CD8-positive, alpha-beta memory T cell (primary cell): ENCODE measurements at regions of chr6 and their contacts with region 1.

Region 1: DNA sequence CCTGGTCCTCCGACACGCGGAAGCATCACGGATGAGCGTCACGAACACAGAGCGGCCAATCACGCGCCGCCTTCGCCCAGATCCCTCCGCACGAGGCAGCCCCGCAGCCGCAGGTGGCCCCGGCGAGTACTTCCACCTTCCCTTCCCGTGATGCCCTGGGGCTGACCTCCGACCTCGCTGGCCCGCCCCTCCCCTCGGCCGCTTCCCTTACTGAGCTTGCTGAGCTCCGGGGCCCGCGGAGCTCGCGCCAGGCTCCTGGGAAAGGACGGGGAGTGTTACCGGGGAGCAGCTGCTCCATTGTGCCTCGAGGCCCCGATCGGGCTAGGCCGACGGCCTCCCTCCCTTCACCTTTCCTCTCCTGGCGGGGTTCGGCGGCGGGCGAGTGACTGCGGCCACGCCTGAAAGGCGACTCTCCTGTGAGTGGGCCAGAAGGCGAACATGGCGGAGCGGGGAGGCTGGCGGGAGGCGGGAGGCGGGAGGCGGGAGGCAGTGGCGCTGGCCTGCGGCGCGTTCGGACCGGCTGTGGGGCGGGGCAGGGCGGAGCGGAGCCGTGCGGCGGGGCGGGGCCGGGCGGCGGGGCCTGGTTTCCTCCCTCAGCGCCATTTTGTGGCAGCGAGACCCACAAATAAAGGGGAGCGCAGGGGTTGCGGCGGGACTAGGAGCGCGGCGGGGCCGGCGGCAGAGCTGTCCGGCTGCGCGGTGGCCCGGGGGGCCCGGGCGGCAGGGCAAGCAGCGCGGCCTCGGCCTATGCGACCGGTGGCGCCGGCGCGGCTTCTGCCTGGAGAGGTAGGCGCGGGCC is at the start of gene WTAP:
- DNase-seq: peak; percentile 95 to 98 (median 96)
- H3K4me3 ChIP-seq: peak within 1 kb of the TSS; percentile 92
- H3K4me3 Mint-ChIP-seq: peak within 1 kb of the TSS; percentile 91 to 99 (median 94)
- H3K27ac ChIP-seq: peak within 1 kb of the TSS; percentile 98
- H3K27ac Mint-ChIP-seq: peak within 1 kb of the TSS; percentile 97 to 100 (median 99)
- H3K4me1 ChIP-seq: peaks cover 35% of the 10 kb centered on the region
- H3K4me1 Mint-ChIP-seq: peaks cover 54 to 75% (median 63%) of the 10 kb centered on the region in 3 donors
- H3K27me3 ChIP-seq: no peaks in the 10 kb centered on the region
- H3K27me3 Mint-ChIP-seq: peaks cover 0 to 6% of the 10 kb centered on the region in 2 donors
- total RNA-seq, gene WTAP: 95.1 to 103 TPM

Region 2: DNA sequence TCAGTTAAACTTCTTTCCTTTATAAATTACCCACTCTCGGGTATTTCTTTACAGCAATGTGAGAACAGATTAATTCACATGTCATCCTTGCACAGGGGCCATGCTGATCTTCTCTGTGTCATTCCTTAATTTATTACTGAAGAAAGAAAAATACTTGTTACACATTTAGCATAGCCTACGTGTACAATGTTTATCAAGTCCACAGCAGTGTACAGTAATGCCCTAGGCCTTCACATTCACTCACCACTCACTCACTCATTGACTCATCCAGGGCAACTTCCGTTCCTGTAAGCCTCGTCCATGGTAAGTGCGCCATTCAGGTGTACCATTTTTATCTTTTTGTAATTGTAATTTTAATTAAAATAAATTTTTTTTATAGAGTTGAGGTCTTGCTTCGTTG is 800.7 kb before region 1 on chr6:
- CTCF ChIA-PET with region 1: no interaction called
- POLR2A ChIA-PET with region 1: no interaction called
- DNase-seq: no peak
- H3K4me3 ChIP-seq: no peak overlapping the region
- H3K4me3 Mint-ChIP-seq: no peak overlapping the region
- H3K27ac ChIP-seq: no peak overlapping the region
- H3K27ac Mint-ChIP-seq: no peak overlapping the region
- H3K4me1 ChIP-seq: no peaks in the 10 kb centered on the region
- H3K4me1 Mint-ChIP-seq: no peaks in the 10 kb centered on the region
- H3K27me3 ChIP-seq: no peaks in the 10 kb centered on the region
- H3K27me3 Mint-ChIP-seq: no peaks in the 10 kb centered on the region

Region 3: GRCh38 chr6:159360306-159360705 is 366.8 kb before region 1 on chr6:
- CTCF ChIA-PET with region 1: no interaction called
- POLR2A ChIA-PET with region 1: no interaction called
- DNase-seq: no peak
- H3K4me3 ChIP-seq: no peak overlapping the region
- H3K4me3 Mint-ChIP-seq: no peak overlapping the region
- H3K27ac ChIP-seq: no peak overlapping the region
- H3K27ac Mint-ChIP-seq: no peak overlapping the region
- H3K4me1 ChIP-seq: no peaks in the 10 kb centered on the region
- H3K4me1 Mint-ChIP-seq: no peaks in the 10 kb centered on the region
- H3K27me3 ChIP-seq: no peaks in the 10 kb centered on the region
- H3K27me3 Mint-ChIP-seq: peaks cover 3 to 33% of the 10 kb centered on the region in 2 donors

Region 4: DNA sequence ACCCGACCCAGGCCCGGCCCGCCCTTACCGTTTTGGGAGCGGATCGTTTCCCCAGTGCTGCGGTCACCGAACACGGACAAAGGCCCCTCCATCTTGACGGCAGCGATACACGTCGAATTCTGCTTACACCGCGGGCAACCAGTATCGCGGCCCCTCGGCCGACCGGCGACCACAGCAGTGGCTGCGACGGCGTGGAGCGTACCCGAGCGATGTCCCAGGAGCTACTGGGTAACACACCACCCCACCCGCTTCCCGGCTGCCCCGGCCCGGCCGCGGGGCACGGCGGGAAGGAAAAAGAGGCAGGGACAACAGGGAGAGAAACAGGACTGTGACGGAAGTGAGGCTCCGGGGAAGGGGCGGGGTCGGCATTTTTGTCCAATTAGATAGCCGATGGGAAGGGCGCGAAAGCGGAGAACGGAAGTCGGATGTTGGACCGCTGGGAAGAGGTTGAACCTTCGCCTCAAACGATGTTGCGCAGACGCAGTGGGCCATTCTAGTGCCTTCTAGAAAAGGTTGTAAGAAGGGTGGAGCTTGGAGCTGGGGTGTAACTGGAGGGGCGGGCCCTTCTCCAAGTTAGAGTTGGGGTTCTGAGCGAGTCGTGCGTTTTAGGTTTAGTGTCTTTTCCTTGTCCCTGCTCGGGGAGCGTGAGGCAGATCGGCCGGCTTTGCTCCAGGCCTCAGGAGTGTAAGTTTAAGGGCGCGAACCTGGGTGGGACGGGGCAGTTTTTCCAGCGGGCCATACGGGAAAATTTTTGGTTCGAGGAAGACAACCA is 62.4 kb after region 1 on chr6 and contains the start of gene TCP1:
- CTCF ChIA-PET with region 1: interaction called, 7 read pairs
- POLR2A ChIA-PET with region 1: interaction called, 84 read pairs
- DNase-seq: peak; percentile 98 to 99 (median 99)
- H3K4me3 ChIP-seq: peak within 1 kb of the TSS; percentile 97
- H3K4me3 Mint-ChIP-seq: peak within 1 kb of the TSS; percentile 93 to 100 (median 98)
- H3K27ac ChIP-seq: peak within 1 kb of the TSS; percentile 95
- H3K27ac Mint-ChIP-seq: peak within 1 kb of the TSS; percentile 94 to 99 (median 98)
- H3K4me1 ChIP-seq: peaks cover 50% of the 10 kb centered on the region
- H3K4me1 Mint-ChIP-seq: peaks cover 57 to 77% (median 68%) of the 10 kb centered on the region in 3 donors
- H3K27me3 ChIP-seq: no peaks in the 10 kb centered on the region
- H3K27me3 Mint-ChIP-seq: peaks cover 0 to 3% of the 10 kb centered on the region in 2 donors
- total RNA-seq, gene TCP1: 589 to 617 TPM

Region 5: GRCh38 chr6:159959165-159959975 is 232.3 kb after region 1 on chr6:
- CTCF ChIA-PET with region 1: no interaction called
- POLR2A ChIA-PET with region 1: no interaction called
- DNase-seq: no peak
- H3K4me3 ChIP-seq: no peak overlapping the region
- H3K4me3 Mint-ChIP-seq: no peak overlapping the region
- H3K27ac ChIP-seq: no peak overlapping the region
- H3K27ac Mint-ChIP-seq: no peak overlapping the region
- H3K4me1 ChIP-seq: no peaks in the 10 kb centered on the region
- H3K4me1 Mint-ChIP-seq: no peaks in the 10 kb centered on the region
- H3K27me3 ChIP-seq: no peaks in the 10 kb centered on the region
- H3K27me3 Mint-ChIP-seq: peaks cover 0 to 16% of the 10 kb centered on the region in 2 donors